Activated CD4-positive, alpha-beta memory T cell treated with anti-CD3 and anti-CD28 coated beads for 36 hours (primary cell): ENCODE measurements at regions of chr14 and their contacts with region 1.

Region 1: DNA sequence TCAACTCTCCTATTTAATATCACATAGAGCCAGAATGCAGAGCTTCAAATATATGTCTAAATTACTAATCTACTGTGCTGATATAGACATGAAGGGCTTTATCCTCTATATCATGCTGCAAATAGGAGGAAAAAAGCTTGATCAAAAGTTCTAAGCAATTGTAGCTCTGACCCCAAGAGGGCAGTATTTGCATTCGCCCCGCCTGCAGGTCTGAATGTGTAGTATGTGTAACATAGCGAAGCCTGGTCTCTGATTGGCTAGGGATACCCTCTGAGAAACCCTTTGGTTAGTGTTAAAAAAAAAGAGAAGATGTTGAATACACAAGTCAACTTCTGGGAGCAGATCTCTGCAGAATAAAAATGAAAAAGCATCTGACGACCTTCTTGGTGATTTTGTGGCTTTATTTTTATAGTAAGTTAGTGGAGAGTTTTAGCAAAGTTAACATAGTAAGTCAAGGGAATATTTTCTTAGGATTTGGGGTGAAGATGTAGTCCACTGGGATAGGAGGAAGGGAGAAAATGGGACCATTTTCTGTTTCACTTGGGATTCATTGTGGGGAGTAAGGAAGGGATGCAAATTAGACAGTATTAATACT is 151.6 kb upstream of the OR4E1 start:
- DNase-seq: peak; percentile 64
- H3K4me3 Mint-ChIP-seq: peak overlapping the region; percentile 58
- H3K27ac Mint-ChIP-seq: peak overlapping the region; percentile 4
- H3K4me1 Mint-ChIP-seq: peaks cover 8% of the 10 kb centered on the region
- H3K27me3 Mint-ChIP-seq: peaks cover 23% of the 10 kb centered on the region

Region 2: DNA sequence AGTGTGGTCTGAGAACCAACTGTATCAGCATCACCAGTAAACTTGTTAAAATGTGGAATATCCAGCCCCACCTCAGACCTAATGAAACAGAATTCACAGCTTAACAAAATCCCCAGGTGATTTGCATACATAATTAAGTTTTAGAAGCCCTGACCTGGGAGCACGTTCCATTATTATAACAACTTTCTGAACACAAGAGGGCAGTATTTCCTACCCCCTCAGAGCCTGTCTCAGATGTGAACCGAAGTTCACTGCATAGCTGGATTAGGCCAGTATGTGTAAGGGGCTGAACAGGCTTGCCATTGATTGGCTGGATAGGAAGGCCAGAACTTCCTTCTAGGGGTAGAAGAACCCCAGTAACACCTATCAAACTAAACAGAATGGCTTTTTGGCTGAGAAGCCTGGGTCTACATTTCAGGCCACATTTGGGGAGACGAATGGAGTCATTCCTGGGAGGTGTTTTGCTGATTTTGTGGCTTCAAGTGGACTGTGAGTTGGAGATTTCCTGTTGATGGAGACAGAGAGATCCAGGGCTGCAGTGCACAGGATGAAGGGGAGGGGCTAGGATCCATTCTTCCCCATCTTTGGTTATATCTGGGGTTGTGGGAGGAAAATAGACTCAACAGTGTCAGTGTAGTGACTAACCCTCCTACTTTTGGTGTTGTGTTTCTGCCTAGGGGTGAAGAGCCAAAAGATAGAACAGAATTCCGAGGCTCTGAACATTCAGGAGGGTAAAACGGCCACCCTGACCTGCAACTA is 57.0 kb before region 1 on chr14:
- CTCF ChIA-PET with region 1: interaction called, 7 read pairs
- POLR2A ChIA-PET with region 1: no interaction called
- intact Hi-C with region 1: loop called (anchors 10 kb)
- DNase-seq: peak; percentile 29
- H3K4me3 Mint-ChIP-seq: peak overlapping the region; percentile 60
- H3K27ac Mint-ChIP-seq: peak overlapping the region; percentile 66
- H3K4me1 Mint-ChIP-seq: peaks cover 5% of the 10 kb centered on the region
- H3K27me3 Mint-ChIP-seq: peaks cover 3% of the 10 kb centered on the region

Region 3: GRCh38 chr14:21796916-21797315 is 28.3 kb before region 1 on chr14:
- CTCF ChIA-PET with region 1: no interaction called
- POLR2A ChIA-PET with region 1: no interaction called
- intact Hi-C with region 1: no loop called
- DNase-seq: peak; percentile 24
- H3K4me3 Mint-ChIP-seq: peak overlapping the region; percentile 58
- H3K27ac Mint-ChIP-seq: peak overlapping the region; percentile 38
- H3K4me1 Mint-ChIP-seq: no peaks in the 10 kb centered on the region
- H3K27me3 Mint-ChIP-seq: peaks cover 3% of the 10 kb centered on the region

Region 4: GRCh38 chr14:21840765-21841164 is 15.5 kb after region 1 on chr14:
- CTCF ChIA-PET with region 1: interaction called, 10 read pairs
- POLR2A ChIA-PET with region 1: no interaction called
- intact Hi-C with region 1: no loop called
- DNase-seq: no peak
- H3K4me3 Mint-ChIP-seq: peak overlapping the region; percentile 53
- H3K27ac Mint-ChIP-seq: peak overlapping the region; percentile 64
- H3K4me1 Mint-ChIP-seq: peaks cover 4% of the 10 kb centered on the region
- H3K27me3 Mint-ChIP-seq: peaks cover 13% of the 10 kb centered on the region

Region 5: DNA sequence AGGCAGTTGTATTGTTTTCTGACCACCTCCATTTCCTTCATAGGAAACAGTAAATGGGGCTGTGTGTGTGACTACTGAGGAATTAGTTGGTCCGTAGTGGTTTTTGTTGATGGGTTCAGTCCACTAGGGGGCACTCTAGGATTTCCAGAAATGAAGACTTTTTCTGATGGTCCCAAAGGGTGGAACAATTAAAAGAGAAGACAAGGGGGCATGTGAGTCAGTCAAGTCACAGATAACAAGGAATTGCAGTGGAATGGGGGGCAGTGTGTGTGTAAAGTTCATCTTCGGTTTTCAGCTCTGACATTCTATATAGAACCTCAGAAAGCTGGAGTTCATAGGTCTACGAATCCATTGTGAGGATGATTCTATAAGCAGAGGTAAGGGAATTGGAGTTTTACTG is 34.9 kb after region 1 on chr14:
- CTCF ChIA-PET with region 1: interaction called, 12 read pairs
- POLR2A ChIA-PET with region 1: no interaction called
- intact Hi-C with region 1: no loop called
- DNase-seq: peak; percentile 40
- H3K4me3 Mint-ChIP-seq: peak overlapping the region; percentile 22
- H3K27ac Mint-ChIP-seq: peak overlapping the region; percentile 73
- H3K4me1 Mint-ChIP-seq: peaks cover 4% of the 10 kb centered on the region
- H3K27me3 Mint-ChIP-seq: no peaks in the 10 kb centered on the region